ENCODE measurements at regions of chr6 and their contacts with region 1.

Region 1: DNA sequence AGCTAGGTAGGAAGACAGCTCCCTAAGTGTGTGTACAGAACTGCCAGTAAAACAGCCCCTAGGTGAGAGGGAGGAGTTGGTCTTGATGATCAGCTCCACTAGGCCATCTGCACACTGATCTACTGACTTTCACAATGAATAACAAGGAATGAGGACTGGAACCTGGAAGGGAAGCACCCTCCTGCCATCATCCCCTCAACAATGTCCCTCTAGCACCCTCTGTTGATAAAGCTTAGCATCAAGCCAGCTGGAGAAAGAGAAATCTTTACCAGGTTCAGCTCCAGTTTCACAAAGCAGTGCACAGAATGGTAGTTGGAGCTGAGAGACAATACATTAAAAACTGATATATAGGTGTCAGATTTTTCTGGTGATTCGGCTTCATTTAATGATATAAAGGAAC is 57.2 kb upstream of the IRAK1BP1 start:
- DNase-seq: peak; percentile 45
- H3K4me3 ChIP-seq: no peak overlapping the region
- H3K27ac ChIP-seq: no peak overlapping the region
- H3K4me1 ChIP-seq: no peaks in the 10 kb centered on the region
- H3K27me3 ChIP-seq: no peaks in the 10 kb centered on the region
- CTCF ChIP-seq: peak; percentile 59

Region 2: GRCh38 chr6:77620278-77620882 is 1189.8 kb before region 1 on chr6:
- CTCF ChIA-PET with region 1: no interaction called
- POLR2A ChIA-PET with region 1: no interaction called
- intact Hi-C with region 1: loop called (anchors 10 kb)
- DNase-seq: peak; percentile 7
- H3K4me3 ChIP-seq: no peak overlapping the region
- H3K27ac ChIP-seq: no peak overlapping the region
- H3K4me1 ChIP-seq: no peaks in the 10 kb centered on the region
- H3K27me3 ChIP-seq: no peaks in the 10 kb centered on the region
- CTCF ChIP-seq: peak; percentile 63

Region 3: GRCh38 chr6:77740380-77740779 is 1069.8 kb before region 1 on chr6:
- CTCF ChIA-PET with region 1: no interaction called
- POLR2A ChIA-PET with region 1: no interaction called
- intact Hi-C with region 1: loop called (anchors 2 kb)
- DNase-seq: peak; percentile 9
- H3K4me3 ChIP-seq: no peak overlapping the region
- H3K27ac ChIP-seq: no peak overlapping the region
- H3K4me1 ChIP-seq: no peaks in the 10 kb centered on the region
- H3K27me3 ChIP-seq: no peaks in the 10 kb centered on the region
- CTCF ChIP-seq: peak; percentile 46; the same call in 1 of the 2 replicates

Measured in A673 (cell line).